Esophagus squamous epithelium (tissue), 5 donors: ENCODE measurements at regions of chr2 and their contacts with region 1.

Region 1: GRCh38 chr2:170815746-170816503 is 762 bp upstream of the GAD1 start:
- DNase-seq: no peak
- H3K4me3 ChIP-seq: peak overlapping the region; percentile 14 to 72 (median 42)
- H3K27ac ChIP-seq: no peak overlapping the region
- H3K4me1 ChIP-seq: peaks cover 50 to 79% (median 54%) of the 10 kb centered on the region in 3 donors
- H3K27me3 ChIP-seq: peaks cover 27 to 97% (median 58%) of the 10 kb centered on the region in 4 donors
- CTCF ChIP-seq: peak; percentile 53 to 89 (median 74)
- POLR2A ChIP-seq: no peak

Region 2: GRCh38 chr2:169221745-169222369 is 1594.1 kb before region 1 on chr2:
- intact Hi-C with region 1: no loop called
- DNase-seq: no peak
- H3K4me3 ChIP-seq: no peak overlapping the region
- H3K27ac ChIP-seq: no peak overlapping the region
- H3K4me1 ChIP-seq: no peaks in the 10 kb centered on the region
- H3K27me3 ChIP-seq: no peaks in the 10 kb centered on the region
- CTCF ChIP-seq: peak in 2 of 6 experiments; percentile 23 to 36
- POLR2A ChIP-seq: no peak

Region 3: DNA sequence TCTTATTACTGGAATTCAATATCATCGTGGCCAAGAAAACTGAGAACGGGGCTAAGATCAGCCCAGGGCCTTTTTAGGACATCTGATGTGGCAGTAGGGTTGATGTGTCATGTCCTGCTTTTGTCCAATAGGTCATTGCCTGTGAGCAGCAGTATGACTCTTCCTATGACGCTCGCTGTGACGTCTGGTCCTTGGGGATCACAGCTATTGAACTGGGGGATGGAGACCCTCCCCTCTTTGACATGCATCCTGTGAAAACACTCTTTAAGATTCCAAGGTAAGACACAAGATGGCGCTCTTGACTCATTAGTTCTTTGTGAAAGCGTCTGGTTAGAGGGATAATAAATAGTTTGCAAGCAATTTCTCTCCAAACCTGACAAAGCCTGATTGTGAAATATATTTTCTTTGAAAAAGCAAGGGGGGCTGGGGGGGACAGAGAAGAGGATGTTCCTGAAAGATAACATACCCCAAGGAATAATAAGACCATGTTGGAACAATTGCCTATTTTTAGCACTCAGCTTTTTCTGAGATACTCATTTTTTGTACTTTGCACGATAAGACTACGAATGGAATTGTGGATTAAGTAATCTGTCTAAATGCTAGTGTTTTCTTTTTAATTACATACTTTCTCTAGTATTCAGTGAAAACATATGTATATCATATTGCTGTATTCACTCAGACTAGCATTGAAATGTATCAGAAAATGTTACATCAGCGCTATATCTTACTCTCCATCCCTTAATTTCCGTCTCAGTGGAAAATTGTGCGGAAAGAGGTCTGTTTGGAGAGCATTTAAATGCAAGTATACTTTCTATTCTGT is 579.9 kb before region 1 on chr2:
- intact Hi-C with region 1: loop called (anchors 10 kb)
- DNase-seq: no peak
- H3K4me3 ChIP-seq: no peak overlapping the region
- H3K27ac ChIP-seq: no peak overlapping the region
- H3K4me1 ChIP-seq: peaks cover 0 to 4% (median 0%) of the 10 kb centered on the region in 3 donors
- H3K27me3 ChIP-seq: no peaks in the 10 kb centered on the region
- CTCF ChIP-seq: peak in 5 of 6 experiments; percentile 21 to 51 (median 34)
- POLR2A ChIP-seq: no peak

Region 4: DNA sequence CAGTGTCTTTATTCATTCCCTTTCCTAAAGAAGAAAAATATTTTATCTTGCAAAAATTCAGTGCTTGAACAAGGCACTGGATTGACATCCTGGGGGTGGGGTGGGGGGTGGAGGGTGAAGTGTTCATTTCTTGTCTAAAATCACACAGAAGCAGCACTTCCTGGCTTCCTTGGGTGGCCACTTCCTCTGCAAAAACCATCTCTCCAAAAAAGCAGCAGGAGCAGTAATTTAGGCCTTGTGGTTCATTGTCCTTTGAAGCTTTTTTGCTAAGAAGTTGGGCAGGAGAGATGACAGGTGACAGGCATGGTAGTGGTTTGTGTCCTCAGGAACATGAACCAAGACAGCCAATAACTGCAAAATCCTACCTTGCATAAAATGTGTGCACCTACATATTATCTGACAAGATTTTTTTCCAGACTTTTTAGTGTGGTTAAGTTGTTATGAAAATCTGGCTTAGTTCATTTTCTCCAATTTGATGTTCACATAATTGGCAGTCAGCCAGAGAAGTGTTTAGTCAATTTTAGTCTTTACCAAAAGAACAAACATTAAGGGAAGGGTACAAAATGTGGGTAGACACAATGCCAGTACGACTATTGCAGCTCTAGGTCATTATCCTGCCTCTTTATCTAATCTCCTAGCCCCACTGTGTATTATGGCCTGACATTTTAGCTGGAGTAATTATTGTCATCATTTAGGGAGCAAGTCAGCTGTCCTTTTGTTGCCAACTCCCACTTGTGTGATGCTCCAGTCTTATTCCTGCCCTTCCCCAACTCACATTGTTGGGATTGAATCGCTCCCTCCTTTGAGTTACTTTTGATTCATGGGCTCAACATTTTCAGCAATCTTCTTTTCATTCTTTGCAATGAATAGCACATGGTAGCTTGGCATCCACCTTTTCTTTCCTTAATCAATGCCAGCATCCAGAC is 460.8 kb before region 1 on chr2:
- intact Hi-C with region 1: no loop called
- DNase-seq: no peak
- H3K4me3 ChIP-seq: no peak overlapping the region
- H3K27ac ChIP-seq: no peak overlapping the region
- H3K4me1 ChIP-seq: no peaks in the 10 kb centered on the region
- H3K27me3 ChIP-seq: peaks cover 0 to 6% (median 0%) of the 10 kb centered on the region in 4 donors
- CTCF ChIP-seq: no peak
- POLR2A ChIP-seq: no peak

Region 5: GRCh38 chr2:170409164-170409535 is 406.8 kb before region 1 on chr2:
- intact Hi-C with region 1: loop called (anchors 5 kb)
- DNase-seq: peak; percentile 0
- H3K4me3 ChIP-seq: peak overlapping the region in 1 of 4 donors; percentile 45
- H3K27ac ChIP-seq: no peak overlapping the region
- H3K4me1 ChIP-seq: peaks cover 0 to 10% (median 6%) of the 10 kb centered on the region in 3 donors
- H3K27me3 ChIP-seq: peaks cover 0 to 29% (median 0%) of the 10 kb centered on the region in 4 donors
- CTCF ChIP-seq: peak; percentile 61 to 88 (median 82)
- POLR2A ChIP-seq: no peak